B cell (primary cell): ENCODE measurements at regions of chr2 and their contacts with region 1.

Region 1: DNA sequence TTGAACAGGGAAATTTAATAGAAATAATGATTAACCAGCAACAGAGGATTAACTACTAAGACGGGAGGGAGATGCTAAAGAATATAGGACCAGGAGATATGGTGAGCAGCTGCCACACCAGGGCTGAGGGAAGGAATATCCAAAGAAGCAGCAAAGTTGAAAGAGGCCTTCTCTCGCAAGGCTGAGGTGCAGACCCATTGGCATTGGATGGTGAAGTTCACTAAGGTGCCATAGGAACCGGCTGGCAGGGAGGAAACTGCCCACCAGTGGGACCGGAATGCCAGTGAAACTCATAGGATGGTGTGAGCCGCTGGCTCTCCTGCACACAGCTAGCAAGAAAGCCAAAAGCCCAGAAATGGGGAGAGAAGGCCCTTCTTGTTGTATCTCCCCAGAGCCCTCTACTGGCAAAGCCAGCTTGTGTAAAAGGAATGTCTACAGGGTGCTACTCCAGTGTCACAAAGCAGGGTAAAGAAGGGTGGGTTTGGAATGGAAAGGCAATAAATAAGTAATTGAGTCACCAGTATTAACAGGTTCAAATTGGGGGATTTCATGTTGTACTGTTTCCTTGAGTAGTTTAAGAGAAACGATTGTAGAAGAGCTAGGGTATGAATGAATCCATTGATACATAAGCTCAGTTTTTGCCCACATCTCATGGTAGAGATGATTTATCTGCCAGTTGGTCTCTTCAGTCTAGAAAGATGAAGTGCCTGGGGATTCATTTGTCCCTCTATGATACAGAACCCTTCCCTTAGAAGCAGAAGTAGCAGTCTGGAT is 36.0 kb downstream of the FARP2 start:
- DNase-seq: peak; percentile 34
- ATAC-seq: peak; percentile 14
- H3K4me3 ChIP-seq: no peak overlapping the region
- H3K4me3 Mint-ChIP-seq: no peak overlapping the region
- H3K27ac ChIP-seq: no peak overlapping the region
- H3K27ac Mint-ChIP-seq: peak overlapping the region; percentile 26
- H3K4me1 ChIP-seq: peaks cover 28 to 43% of the 10 kb centered on the region in 2 donors
- H3K4me1 Mint-ChIP-seq: peaks cover 46% of the 10 kb centered on the region
- H3K27me3 ChIP-seq: no peaks in the 10 kb centered on the region
- H3K27me3 Mint-ChIP-seq: no peaks in the 10 kb centered on the region
- CTCF ChIP-seq: no peak

Region 2: GRCh38 chr2:241041589-241042158 is 350.4 kb before region 1 on chr2:
- CTCF ChIA-PET with region 1: no interaction called
- POLR2A ChIA-PET with region 1: no interaction called
- intact Hi-C with region 1: no loop called
- DNase-seq: peak; percentile 92
- ATAC-seq: peak; percentile 67
- H3K4me3 ChIP-seq: peak overlapping the region in 1 of 5 experiments; percentile 15
- H3K4me3 Mint-ChIP-seq: peak overlapping the region; percentile 92
- H3K27ac ChIP-seq: peak overlapping the region; percentile 90 to 96
- H3K27ac Mint-ChIP-seq: peak overlapping the region; percentile 91
- H3K4me1 ChIP-seq: peaks cover 58 to 62% of the 10 kb centered on the region in 2 donors
- H3K4me1 Mint-ChIP-seq: peaks cover 66% of the 10 kb centered on the region
- H3K27me3 ChIP-seq: no peaks in the 10 kb centered on the region
- H3K27me3 Mint-ChIP-seq: no peaks in the 10 kb centered on the region
- CTCF ChIP-seq: no peak

Region 3: GRCh38 chr2:241271641-241272297 is 120.3 kb before region 1 on chr2:
- CTCF ChIA-PET with region 1: interaction called, 7 read pairs
- POLR2A ChIA-PET with region 1: no interaction called
- intact Hi-C with region 1: loop called (anchors 1 kb)
- DNase-seq: peak; percentile 68
- ATAC-seq: peak; percentile 70
- H3K4me3 ChIP-seq: peak overlapping the region; percentile 62 to 81 (median 67)
- H3K4me3 Mint-ChIP-seq: peak overlapping the region; percentile 98
- H3K27ac ChIP-seq: peak overlapping the region; percentile 21 to 40
- H3K27ac Mint-ChIP-seq: peak overlapping the region; percentile 92
- H3K4me1 ChIP-seq: peaks cover 12 to 21% of the 10 kb centered on the region in 2 donors
- H3K4me1 Mint-ChIP-seq: peaks cover 31% of the 10 kb centered on the region
- H3K27me3 ChIP-seq: no peaks in the 10 kb centered on the region
- H3K27me3 Mint-ChIP-seq: no peaks in the 10 kb centered on the region
- CTCF ChIP-seq: no peak

Region 4: DNA sequence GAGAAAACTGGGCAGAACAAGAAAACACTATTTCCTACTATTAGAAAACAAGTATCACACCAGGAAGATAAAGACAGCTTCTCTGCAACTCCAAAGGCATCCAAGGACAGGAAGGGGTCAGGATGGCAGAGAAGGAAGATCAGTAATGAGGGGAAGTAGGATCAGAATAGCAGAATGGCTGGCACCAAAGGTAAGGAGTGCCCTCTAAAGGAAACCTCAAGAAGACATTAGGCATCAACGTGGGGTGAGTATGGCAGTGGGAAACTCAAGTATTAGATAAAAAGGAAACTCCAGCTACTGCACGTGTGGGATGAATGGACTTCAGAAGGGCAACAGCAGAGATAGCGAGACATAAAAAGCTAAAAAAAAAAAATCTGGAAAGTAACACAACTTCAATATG is 102.5 kb before region 1 on chr2:
- CTCF ChIA-PET with region 1: no interaction called
- POLR2A ChIA-PET with region 1: no interaction called
- intact Hi-C with region 1: no loop called
- DNase-seq: no peak
- ATAC-seq: no peak
- H3K4me3 ChIP-seq: no peak overlapping the region
- H3K4me3 Mint-ChIP-seq: no peak overlapping the region
- H3K27ac ChIP-seq: no peak overlapping the region
- H3K27ac Mint-ChIP-seq: no peak overlapping the region
- H3K4me1 ChIP-seq: peaks cover 0 to 4% of the 10 kb centered on the region in 2 donors
- H3K4me1 Mint-ChIP-seq: peaks cover 36% of the 10 kb centered on the region
- H3K27me3 ChIP-seq: no peaks in the 10 kb centered on the region
- H3K27me3 Mint-ChIP-seq: no peaks in the 10 kb centered on the region
- CTCF ChIP-seq: no peak

Region 5: DNA sequence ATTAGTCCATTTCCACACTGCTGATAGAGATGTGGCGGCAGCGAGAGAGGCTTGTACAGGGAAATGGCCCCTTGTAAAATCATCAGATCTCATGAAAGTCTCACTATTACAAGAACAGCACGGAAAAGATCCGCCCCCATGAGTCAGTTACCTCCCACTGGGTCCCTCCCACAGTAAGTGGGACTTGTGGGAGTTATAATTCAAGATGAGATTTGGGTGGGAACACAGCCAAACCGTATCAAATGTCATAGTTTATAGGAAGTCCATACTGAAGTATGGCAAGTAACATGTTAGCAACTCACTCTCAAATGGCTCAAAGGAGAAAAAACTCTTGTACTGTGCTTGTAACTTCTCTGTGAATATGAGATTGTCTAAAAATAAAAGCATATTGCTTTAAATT is 20.1 kb after region 1 on chr2:
- CTCF ChIA-PET with region 1: interaction called, 3 read pairs
- POLR2A ChIA-PET with region 1: interaction called, 10 read pairs
- intact Hi-C with region 1: no loop called
- DNase-seq: no peak
- ATAC-seq: no peak
- H3K4me3 ChIP-seq: no peak overlapping the region
- H3K4me3 Mint-ChIP-seq: no peak overlapping the region
- H3K27ac ChIP-seq: no peak overlapping the region
- H3K27ac Mint-ChIP-seq: no peak overlapping the region
- H3K4me1 ChIP-seq: no peaks in the 10 kb centered on the region
- H3K4me1 Mint-ChIP-seq: no peaks in the 10 kb centered on the region
- H3K27me3 ChIP-seq: no peaks in the 10 kb centered on the region
- H3K27me3 Mint-ChIP-seq: no peaks in the 10 kb centered on the region
- CTCF ChIP-seq: no peak

Region 6: DNA sequence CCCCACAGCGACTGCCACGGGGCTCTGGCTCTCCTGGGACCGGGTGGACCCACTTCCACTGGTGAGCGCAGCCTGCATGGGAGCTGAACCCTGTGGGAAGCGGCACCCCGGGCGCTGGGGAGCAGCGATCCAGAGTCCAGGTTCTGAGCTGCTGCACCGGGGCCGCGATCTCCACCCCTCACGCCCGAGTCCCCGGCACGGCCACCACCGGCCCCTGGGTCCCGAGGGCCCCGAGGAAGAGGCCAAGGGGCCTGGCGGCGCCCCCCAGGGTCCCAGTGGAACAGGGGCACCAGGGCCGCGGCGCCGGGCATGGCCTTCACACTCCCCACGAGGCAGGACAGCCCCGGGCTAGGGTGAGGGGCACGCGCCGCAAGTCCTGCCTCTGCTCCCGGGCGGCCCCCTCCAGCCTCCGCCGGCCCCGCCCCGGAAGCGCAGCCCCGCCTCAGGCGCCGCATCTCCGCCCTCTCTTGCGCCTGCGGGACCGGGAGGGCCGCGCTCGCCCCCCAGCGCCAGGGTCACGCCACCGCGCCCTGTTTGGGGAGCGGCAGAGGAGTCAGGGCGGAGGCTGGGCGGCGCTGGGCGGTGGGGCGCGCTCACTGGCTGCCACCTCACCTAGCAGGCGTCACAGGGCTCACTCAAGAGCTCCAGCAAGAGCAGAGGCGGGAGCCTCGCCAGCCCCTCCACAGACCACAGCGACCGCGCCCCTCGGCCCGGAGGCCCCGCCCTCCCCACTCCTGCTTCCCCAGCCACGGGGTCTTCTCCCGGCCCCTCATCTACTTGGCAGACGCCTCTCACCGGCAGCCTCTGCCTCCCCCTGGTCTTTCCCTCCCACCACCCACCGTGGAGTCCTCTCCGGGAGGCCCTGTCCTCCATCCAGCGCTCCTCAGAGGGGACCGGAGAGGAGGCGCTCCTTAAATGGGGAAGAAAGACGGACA is 218.0 kb after region 1 on chr2:
- CTCF ChIA-PET with region 1: no interaction called
- POLR2A ChIA-PET with region 1: no interaction called
- intact Hi-C with region 1: loop called (anchors 1 kb)
- DNase-seq: peak; percentile 93
- ATAC-seq: peak; percentile 99
- H3K4me3 ChIP-seq: peak overlapping the region in 4 of 5 experiments; percentile 50 to 71 (median 62)
- H3K4me3 Mint-ChIP-seq: peak overlapping the region; percentile 66
- H3K27ac ChIP-seq: peak overlapping the region; percentile 50 to 74
- H3K27ac Mint-ChIP-seq: peak overlapping the region; percentile 63
- H3K4me1 ChIP-seq: peaks cover 8 to 16% of the 10 kb centered on the region in 2 donors
- H3K4me1 Mint-ChIP-seq: peaks cover 20% of the 10 kb centered on the region
- H3K27me3 ChIP-seq: no peaks in the 10 kb centered on the region
- H3K27me3 Mint-ChIP-seq: no peaks in the 10 kb centered on the region
- CTCF ChIP-seq: peak; percentile 76